ENCODE measurements at regions of chr10 and their contacts with region 1.

Region 1: GRCh38 chr10:70493660-70494234 is 15.2 kb downstream of the PALD1 start:
- DNase-seq: peak; percentile 71
- ATAC-seq: peak; percentile 83
- H3K4me3 ChIP-seq: peak overlapping the region; percentile 48
- H3K27ac ChIP-seq: peak overlapping the region; percentile 89
- H3K4me1 ChIP-seq: peaks cover 56% of the 10 kb centered on the region
- H3K27me3 ChIP-seq: no peaks in the 10 kb centered on the region
- CTCF ChIP-seq: no peak
- EP300 ChIP-seq: no peak
- POLR2A ChIP-seq: peak; percentile 45
- RAD21 ChIP-seq: no peak

Region 2: GRCh38 chr10:70440296-70441160 is 53.2 kb before region 1 on chr10:
- CTCF ChIA-PET with region 1: no interaction called
- POLR2A ChIA-PET with region 1: no interaction called
- RAD21 ChIA-PET with region 1: no interaction called
- SMC1A ChIA-PET with region 1: no interaction called
- in situ Hi-C with region 1: no loop called
- intact Hi-C with region 1: no loop called
- DNase-seq: no peak
- ATAC-seq: no peak
- H3K4me3 ChIP-seq: no peak overlapping the region
- H3K27ac ChIP-seq: no peak overlapping the region
- H3K4me1 ChIP-seq: no peaks in the 10 kb centered on the region
- H3K27me3 ChIP-seq: peaks cover 13 to 18% of the 10 kb centered on the region in 2 experiments
- CTCF ChIP-seq: no peak
- EP300 ChIP-seq: no peak
- POLR2A ChIP-seq: no peak
- RAD21 ChIP-seq: no peak

Region 3: DNA sequence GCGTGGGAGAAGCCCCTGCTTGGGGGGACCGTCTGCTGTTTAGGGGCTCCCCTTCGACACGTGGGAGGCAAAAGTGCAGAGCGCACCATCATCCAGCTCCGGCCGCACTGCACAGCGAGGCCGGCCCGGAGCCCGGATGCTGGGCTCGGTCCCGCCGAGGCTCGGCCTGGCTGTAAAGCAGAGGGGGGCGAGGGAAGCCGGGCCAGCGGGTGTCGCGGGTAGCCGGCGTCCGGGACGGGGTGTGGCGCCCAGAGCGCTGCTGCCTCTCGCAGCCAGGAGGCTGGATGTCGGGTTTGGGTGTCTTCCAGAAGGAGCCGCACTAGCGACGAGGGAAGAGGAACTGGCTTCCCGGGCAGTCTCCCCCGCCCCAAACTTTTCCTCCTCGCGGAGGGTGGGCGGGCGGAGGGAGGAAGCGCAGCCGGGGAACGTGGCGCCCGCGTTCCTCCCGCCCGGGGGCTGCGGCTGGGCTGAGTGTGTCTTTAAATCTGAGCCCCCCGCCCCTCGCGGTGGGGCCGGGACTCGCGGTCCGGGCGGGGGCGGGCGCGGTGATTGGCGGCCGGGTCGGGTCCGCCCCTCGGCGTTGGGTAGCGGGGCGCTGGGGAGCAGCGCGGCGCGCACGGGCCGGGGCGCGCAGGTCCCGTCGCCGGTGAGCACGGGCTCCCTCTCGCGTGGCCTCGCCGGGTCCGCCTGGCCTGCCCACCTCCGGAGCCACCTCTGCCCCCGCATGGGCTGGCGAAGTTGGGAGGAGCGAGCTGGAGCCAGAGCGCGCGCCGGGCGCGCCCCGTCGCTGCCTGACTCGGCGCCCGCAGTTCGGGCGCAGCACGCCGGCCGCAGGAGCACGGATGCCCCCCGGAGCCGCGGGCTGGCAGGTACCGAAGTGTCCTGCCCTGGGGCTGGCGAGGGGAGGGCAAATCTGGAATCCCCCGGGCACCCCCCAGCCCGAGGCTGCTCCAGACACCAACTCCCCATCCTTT is 15.3 kb before region 1 on chr10 and contains the start of gene PALD1:
- CTCF ChIA-PET with region 1: interaction called, 7 read pairs
- POLR2A ChIA-PET with region 1: interaction called, 38 read pairs
- RAD21 ChIA-PET with region 1: interaction called, 27 read pairs
- SMC1A ChIA-PET with region 1: interaction called, 21 read pairs
- in situ Hi-C with region 1: no loop called
- intact Hi-C with region 1: loop called (anchors 2 kb)
- DNase-seq: no peak
- ATAC-seq: peak; percentile 63
- H3K4me3 ChIP-seq: peak within 1 kb of the TSS; percentile 78
- H3K27ac ChIP-seq: peak within 1 kb of the TSS; percentile 64
- H3K4me1 ChIP-seq: peaks cover 50% of the 10 kb centered on the region
- H3K27me3 ChIP-seq: no peaks in the 10 kb centered on the region
- CTCF ChIP-seq: no peak
- EP300 ChIP-seq: no peak
- POLR2A ChIP-seq: peak; percentile 67
- RAD21 ChIP-seq: no peak
- polyA plus RNA-seq, gene PALD1: 0.43 to 1.2 TPM

Region 4: GRCh38 chr10:70513848-70514309 is 20.1 kb after region 1 on chr10:
- CTCF ChIA-PET with region 1: interaction called, 8 read pairs
- POLR2A ChIA-PET with region 1: interaction called, 9 read pairs
- RAD21 ChIA-PET with region 1: interaction called, 19 read pairs
- SMC1A ChIA-PET with region 1: interaction called, 24 read pairs
- in situ Hi-C with region 1: no loop called
- intact Hi-C with region 1: no loop called
- DNase-seq: peak; percentile 51
- ATAC-seq: peak; percentile 99
- H3K4me3 ChIP-seq: no peak overlapping the region
- H3K27ac ChIP-seq: no peak overlapping the region
- H3K4me1 ChIP-seq: peaks cover 18% of the 10 kb centered on the region
- H3K27me3 ChIP-seq: no peaks in the 10 kb centered on the region
- CTCF ChIP-seq: no peak
- EP300 ChIP-seq: no peak
- POLR2A ChIP-seq: no peak
- RAD21 ChIP-seq: no peak